ENCODE measurements at regions of chr11 and their contacts with region 1.

Region 1: DNA sequence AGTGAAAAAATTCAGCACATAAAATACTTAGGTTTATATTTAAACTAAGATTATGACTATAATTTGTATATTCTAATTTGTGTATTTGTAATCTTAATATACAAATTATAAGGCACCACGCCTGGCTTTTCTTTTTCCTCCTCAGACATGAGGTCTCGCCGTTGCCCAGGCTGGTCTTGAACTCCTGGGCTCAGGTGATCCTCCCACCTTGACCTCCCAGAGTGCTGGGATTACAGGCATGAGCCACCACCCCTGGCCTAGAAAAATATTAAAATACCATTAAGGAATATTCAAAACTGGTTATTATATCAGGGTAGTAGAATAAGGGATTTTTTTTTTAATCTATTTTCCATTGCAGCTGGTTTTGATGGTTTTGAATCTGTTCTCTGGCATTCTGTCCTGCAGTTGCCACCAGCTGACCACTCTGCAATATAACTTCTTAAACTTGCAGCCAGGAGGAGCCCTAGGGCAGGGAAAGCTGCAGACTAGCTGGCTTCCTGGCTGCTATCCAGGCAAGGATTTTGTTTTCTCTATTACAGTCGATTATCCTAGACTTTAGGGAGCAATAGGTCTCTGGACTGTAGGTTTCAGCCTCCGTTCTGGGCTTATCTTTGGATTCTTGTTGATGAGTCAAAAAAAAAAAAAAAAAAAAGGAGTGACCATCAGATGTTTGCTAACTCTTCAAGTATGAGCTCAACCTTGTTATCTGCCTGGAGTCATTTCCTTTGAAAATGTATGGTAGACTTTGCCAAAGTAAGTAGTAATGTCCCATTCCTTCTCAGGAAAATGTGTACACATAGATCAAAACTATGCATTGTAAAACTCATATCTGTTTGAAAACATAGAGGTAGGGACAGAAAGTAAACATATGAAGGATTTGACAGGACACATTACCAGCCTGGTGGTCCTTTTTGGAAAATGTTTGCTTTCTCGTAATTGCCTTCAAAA is 13.2 kb downstream of the POLA2 start:
- DNase-seq: peak; percentile 79
- H3K4me3 ChIP-seq: no peak overlapping the region
- H3K27ac ChIP-seq: peak overlapping the region in 3 of 8 donors; percentile 26 to 53 (median 52)
- H3K4me1 ChIP-seq: peaks cover under 1 to 35% (median 18%) of the 10 kb centered on the region in 6 donors
- H3K27me3 ChIP-seq: no peaks in the 10 kb centered on the region
- CTCF ChIP-seq: peak; percentile 36 to 87 (median 75)
- POLR2A ChIP-seq: no peak

Region 2: DNA sequence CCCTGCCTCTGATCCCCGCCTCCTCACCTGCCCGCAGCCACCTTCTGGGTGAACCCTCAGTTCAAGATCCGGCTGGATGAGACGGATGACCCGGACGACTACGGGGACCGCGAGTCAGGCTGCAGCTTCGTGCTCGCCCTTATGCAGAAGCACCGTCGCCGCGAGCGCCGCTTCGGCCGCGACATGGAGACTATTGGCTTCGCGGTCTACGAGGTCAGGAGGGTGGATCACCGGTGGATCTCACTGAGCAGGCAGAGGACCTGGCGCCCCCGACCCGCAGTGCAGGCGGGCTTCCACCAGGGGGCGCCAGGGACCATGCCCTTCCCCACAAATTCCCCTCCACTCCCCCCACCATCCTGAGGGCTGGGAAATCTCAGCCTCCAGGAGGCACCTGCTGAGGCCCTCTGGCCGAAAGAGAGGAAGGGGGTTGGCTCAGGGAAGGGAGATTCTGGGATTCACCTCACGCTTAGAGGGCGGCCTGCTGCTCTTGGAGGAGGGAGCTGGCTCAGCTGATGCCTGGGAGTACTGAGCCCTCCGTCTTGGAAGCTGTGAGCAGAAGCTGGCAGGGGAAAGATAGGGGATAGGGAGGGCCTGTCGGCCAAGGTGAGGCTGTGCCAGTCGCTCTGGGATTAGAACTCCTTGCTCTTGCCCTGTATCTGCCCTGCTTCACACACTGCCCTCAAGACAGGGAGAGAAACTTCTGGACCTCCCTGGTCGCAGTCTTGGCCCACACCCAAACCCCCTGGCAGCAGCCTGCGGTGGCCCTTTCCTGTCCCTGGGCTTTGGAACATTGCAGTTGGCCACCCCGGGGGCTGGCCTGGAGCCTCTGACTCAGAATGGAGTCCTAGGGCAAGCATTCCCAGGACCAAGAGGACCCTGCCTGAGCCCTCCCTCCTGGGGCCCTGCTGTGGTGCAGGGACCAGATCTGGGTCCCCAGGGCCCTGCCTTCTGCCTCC is 70.1 kb before region 1 on chr11:
- intact Hi-C with region 1: no loop called
- DNase-seq: peak; percentile 82
- H3K4me3 ChIP-seq: no peak overlapping the region
- H3K27ac ChIP-seq: no peak overlapping the region
- H3K4me1 ChIP-seq: peaks cover 0 to 29% (median 14%) of the 10 kb centered on the region in 6 donors
- H3K27me3 ChIP-seq: no peaks in the 10 kb centered on the region
- CTCF ChIP-seq: peak; percentile 71 to 96 (median 89)
- POLR2A ChIP-seq: no peak

Region 3: DNA sequence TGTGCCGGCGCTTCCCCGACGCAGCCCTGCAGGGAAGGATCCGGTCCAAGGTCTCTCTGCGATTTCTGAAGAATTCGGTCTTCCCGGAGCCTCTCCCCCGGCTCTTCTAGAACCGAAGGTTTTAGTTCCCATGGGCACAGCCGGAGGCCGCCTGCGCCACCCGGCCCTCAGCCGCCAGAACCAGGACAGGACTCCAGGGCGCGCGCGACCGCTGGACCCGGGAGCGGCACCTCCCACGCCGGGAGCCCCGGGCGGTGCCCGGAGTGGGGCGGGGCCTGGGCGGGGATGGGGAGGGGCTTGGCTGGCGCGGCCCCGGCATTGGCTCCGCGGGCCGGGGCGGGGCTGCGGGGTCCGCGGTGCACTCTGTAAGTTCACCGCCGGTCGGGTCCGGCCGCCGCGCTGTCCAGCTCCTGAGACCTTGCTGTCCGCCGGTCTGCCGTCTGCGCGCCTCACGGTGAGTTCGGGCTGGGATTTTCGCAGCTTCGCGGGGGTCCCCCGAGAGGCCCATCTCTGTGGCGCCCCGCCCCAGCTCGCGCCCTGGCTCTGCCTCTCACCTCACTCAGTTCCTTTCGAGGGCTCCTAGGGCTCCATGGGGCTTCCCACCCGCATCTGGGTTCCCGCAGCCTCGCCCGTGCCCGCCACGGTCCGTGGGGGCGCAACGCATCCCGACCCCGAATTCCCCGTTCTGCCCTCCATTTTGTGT is 39.6 kb after region 1 on chr11 and contains the start of gene CDC42EP2:
- intact Hi-C with region 1: loop called (anchors 5 kb)
- DNase-seq: peak; percentile 94
- H3K4me3 ChIP-seq: peak within 1 kb of the TSS; percentile 77 to 98 (median 86)
- H3K27ac ChIP-seq: peak within 1 kb of the TSS; percentile 68 to 97 (median 87)
- H3K4me1 ChIP-seq: peaks cover 6 to 98% (median 70%) of the 10 kb centered on the region in 6 donors
- H3K27me3 ChIP-seq: peaks cover 0 to 12% (median 0%) of the 10 kb centered on the region in 7 donors
- CTCF ChIP-seq: peak in 3 of 11 experiments; percentile 29 to 63 (median 34)
- POLR2A ChIP-seq: peak in 1 of 3 donors; percentile 27
- total RNA-seq, gene CDC42EP2: 14.5 to 48.0 (median 26.4) TPM

Measured in spleen (tissue), 13 donors.